ENCODE measurements at regions of chr7 and their contacts with region 1.

Region 1: DNA sequence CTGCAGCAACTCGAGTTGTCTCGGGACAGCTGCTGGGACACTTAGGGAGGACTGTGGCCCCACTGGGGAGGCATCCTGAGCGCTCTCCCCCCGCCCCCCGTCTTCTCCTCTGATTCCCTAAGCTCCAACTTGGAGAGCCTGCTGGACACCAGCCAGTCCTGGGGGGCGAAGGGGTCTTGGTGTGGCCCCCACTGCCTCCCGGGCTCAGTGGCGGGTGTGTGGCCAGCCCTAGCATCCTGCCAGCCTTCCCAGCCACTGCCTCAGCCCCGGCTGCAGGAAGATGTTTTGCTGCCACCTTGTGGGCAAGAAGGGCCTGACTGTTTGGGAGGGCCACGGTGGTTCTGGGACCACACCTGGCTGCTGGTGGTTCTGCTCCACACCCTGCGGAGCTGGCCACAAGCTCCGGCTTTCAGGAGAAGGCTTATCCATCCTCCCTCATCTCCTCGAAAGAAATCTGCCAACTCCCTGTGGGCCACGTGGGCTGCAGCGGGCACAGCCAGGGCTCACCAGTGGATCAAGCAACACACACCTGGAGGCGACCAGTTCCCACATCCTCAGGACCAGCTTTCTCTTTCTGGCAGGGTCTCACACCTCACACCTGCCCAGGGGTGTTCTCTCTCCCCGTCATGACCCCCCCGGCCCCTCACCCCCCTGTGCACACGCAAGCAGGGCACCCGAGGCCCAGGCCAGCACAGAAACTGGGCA is 24.8 kb downstream of the AGAP3 start:
- DNase-seq: peak; percentile 54 to 84 (median 78)
- ATAC-seq: peak; percentile 80
- H3K4me3 ChIP-seq: no peak overlapping the region
- H3K4me3 Mint-ChIP-seq: no peak overlapping the region
- H3K27ac ChIP-seq: no peak overlapping the region
- H3K27ac Mint-ChIP-seq: no peak overlapping the region
- H3K4me1 ChIP-seq: no peaks in the 10 kb centered on the region
- H3K4me1 Mint-ChIP-seq: peaks cover 6% of the 10 kb centered on the region
- H3K27me3 ChIP-seq: peaks cover 2 to 8% of the 10 kb centered on the region in 2 experiments
- H3K27me3 Mint-ChIP-seq: peaks cover 9% of the 10 kb centered on the region
- CTCF ChIP-seq: peak; percentile 75

Region 2: DNA sequence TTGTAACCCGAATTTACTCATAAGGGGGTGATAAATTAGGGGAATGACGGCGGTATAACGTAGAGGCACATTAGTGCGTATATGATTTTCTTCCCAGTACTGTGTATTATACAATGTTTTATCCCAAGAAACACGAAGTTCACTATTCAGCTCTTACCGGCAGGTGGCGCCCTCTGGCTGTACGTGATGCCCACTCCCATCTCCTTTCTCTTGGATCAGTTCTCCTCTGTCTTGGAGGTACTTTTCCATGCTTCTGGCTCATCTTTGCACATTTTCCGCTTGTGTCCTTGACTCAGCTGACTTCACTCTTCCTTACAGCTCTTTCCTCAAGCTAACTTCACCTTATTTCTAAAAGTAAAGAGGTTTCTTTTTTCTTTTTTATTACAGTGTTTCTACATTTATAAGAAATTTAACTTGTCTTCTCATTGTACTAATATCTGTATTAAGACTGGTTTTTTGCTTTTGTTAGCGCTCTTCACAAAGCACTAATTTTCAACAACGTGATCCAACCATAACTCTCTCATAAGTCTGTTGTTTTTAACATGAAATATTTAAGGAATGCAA is 332.3 kb before region 1 on chr7:
- CTCF ChIA-PET with region 1: interaction called, 4 read pairs
- POLR2A ChIA-PET with region 1: no interaction called
- intact Hi-C with region 1: loop called in 1 of 2 experiments (anchors 2 kb)
- DNase-seq: peak; percentile 46 to 82 (median 73)
- ATAC-seq: peak; percentile 71
- H3K4me3 ChIP-seq: no peak overlapping the region
- H3K4me3 Mint-ChIP-seq: no peak overlapping the region
- H3K27ac ChIP-seq: no peak overlapping the region
- H3K27ac Mint-ChIP-seq: no peak overlapping the region
- H3K4me1 ChIP-seq: peaks cover 2% of the 10 kb centered on the region
- H3K4me1 Mint-ChIP-seq: peaks cover 5% of the 10 kb centered on the region
- H3K27me3 ChIP-seq: no peaks in the 10 kb centered on the region
- H3K27me3 Mint-ChIP-seq: peaks cover 2% of the 10 kb centered on the region
- CTCF ChIP-seq: peak; percentile 93

Region 3: DNA sequence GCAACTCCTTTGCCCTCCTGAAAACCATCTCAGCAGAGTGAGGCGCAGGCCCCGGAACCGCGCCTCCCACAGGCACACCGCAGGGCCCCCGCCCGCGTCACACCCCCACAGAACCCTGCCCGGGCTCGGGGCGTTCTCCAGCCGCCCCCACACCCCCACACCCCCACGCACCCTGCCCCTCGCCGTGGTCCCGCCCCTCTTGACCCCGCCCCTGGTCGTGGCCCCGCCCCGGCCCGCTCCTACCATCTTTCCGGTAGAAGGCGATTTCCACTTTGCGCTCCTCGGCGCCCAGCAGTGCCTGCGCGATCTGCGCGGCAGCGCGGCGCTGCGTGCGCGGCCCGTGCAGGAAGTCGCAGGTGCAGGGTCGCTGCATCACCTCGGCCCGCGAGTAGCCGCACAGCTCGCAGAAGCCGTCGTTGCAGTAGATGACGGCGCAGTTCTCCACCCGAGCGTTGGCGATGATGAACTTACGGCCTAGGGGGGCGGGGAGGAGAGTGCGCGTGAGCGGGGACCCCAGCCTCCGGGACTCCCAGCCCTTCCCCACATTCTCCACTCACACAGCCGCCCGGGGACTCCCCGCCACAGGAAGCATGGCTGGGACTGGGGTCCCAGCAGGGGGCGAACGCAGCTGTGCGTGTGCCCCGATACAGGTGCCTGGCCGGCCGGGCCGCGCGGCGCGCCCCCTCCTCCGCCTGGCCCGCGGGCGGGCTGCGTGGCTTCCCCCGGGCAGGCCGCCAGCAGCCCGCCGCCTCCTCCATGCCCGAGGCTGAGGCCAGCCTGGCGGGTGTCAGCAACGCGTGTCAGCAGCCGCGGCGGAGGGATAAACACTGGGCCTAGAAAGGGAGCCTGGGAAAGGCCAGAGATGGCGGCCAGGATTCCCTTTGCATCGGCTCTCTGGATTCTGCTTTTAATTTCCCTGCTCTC is 136.4 kb before region 1 on chr7:
- CTCF ChIA-PET with region 1: interaction called, 11 read pairs
- POLR2A ChIA-PET with region 1: no interaction called
- intact Hi-C with region 1: no loop called
- DNase-seq: peak; percentile 70 to 90 (median 80)
- ATAC-seq: peak; percentile 77
- H3K4me3 ChIP-seq: peak overlapping the region; percentile 63 to 69
- H3K4me3 Mint-ChIP-seq: peak overlapping the region; percentile 84
- H3K27ac ChIP-seq: peak overlapping the region; percentile 24 to 82
- H3K27ac Mint-ChIP-seq: peak overlapping the region; percentile 89
- H3K4me1 ChIP-seq: peaks cover 43% of the 10 kb centered on the region
- H3K4me1 Mint-ChIP-seq: peaks cover 38% of the 10 kb centered on the region
- H3K27me3 ChIP-seq: peaks cover 17 to 20% of the 10 kb centered on the region in 2 experiments
- H3K27me3 Mint-ChIP-seq: peaks cover 18% of the 10 kb centered on the region
- CTCF ChIP-seq: peak; percentile 24

Region 4: DNA sequence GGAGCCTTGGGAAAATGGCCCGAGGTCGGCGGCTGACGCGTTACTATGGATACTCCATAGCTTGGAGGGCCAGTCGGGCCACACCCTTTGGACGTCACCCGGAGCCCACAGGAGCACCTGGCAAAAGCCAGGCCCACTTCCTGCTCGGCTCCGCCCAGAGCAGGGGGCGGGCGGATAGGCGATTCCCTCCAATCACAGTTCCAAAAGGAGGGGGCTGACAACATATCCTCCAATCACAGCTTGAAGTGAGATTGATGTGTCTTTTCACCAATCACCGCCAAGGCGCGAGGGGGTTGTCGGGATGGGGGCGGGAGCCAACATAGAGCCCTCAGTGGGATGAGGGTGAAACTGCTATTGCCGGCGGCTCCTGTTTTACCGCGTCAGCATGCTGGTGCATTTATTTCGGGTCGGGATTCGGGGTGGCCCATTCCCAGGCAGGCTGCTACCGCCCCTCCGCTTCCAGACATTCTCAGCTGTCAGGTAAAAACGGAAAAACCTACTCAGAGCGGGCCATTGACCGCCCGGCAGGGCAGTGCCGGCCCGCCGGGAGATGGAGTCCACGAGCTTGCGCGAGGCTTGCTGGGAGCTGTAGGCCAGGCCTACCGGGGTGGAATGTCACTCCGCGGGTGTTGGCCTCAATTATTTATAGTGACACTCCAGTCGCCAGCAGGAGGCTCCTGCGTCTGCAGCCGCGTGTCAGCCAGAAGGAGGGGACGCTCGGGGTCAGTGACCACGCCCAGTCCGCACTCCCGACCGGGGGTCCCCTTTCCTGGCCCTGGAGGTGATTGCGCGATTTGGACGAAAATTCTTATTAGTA is 82.8 kb before region 1 on chr7 and contains the start of gene ABCB8:
- CTCF ChIA-PET with region 1: interaction called, 13 read pairs
- POLR2A ChIA-PET with region 1: interaction called, 4 read pairs
- intact Hi-C with region 1: loop called (anchors 1 to 2 kb)
- DNase-seq: peak; percentile 93 to 99 (median 98)
- ATAC-seq: peak; percentile 92
- H3K4me3 ChIP-seq: peak within 1 kb of the TSS; percentile 67 to 75
- H3K4me3 Mint-ChIP-seq: peak within 1 kb of the TSS; percentile 96
- H3K27ac ChIP-seq: peak within 1 kb of the TSS; percentile 94 to 96
- H3K27ac Mint-ChIP-seq: peak within 1 kb of the TSS; percentile 99
- H3K4me1 ChIP-seq: peaks cover 12% of the 10 kb centered on the region
- H3K4me1 Mint-ChIP-seq: peaks cover 24% of the 10 kb centered on the region
- H3K27me3 ChIP-seq: no peaks in the 10 kb centered on the region
- H3K27me3 Mint-ChIP-seq: no peaks in the 10 kb centered on the region
- CTCF ChIP-seq: peak; percentile 35
- total RNA-seq, gene ABCB8: 43.6 to 49.3 TPM

Region 5: DNA sequence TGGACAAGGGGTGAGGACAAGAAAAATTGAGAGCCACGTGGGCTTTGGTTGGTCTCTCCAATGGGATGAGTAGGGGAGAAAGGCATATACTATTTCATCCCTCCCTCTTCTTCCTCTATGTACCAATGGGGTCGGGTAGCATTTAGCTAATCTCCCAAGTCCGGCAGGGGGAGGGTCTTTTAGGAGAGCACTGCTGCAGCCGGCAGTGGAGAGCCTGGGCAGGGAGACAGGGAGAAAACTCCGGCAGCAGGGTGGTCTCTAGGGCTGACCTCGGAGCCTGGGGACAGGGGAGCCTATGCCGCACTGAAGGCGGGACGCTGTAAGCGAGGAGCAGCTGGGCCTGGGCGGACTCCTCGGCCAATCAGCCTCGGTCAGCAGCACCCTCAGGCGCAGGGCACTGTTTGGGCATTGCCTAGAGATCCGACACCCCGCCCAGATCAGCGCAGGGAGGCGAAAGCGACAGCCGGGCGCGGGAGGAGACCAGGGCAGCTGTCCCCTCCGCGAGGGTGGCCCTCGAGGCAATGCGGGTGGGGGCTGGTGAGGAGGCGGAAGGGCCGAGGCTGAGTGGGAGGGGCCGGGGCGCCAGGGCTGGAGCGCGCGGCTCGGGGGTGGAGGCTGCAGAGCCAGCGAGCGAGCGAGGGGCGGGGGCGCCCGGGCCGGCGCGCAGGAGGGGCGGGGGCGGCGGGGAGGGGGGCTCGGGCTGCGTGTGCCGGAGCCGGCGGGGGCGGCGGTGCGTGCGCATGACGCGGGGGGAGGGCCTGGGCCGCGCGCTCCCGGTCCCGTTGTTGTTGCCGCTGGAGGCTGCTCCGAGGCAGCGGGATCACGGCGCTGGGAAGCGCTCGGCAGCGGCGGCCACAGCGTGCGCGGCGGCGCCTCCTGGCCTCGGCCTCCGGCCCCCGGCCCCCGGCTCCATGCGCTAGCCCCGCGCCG is 25.1 kb before region 1 on chr7 and contains the start of gene AGAP3:
- CTCF ChIA-PET with region 1: interaction called, 7 read pairs
- POLR2A ChIA-PET with region 1: interaction called, 3 read pairs
- intact Hi-C with region 1: loop called (anchors 1 to 2 kb)
- DNase-seq: peak in 7 of 9 experiments; percentile 30 to 71 (median 57)
- ATAC-seq: no peak
- H3K4me3 ChIP-seq: peak within 1 kb of the TSS; percentile 65 to 80
- H3K4me3 Mint-ChIP-seq: peak within 1 kb of the TSS; percentile 88
- H3K27ac ChIP-seq: peak within 1 kb of the TSS in 1 of 2 experiments; percentile 51
- H3K27ac Mint-ChIP-seq: peak within 1 kb of the TSS; percentile 85
- H3K4me1 ChIP-seq: peaks cover 58% of the 10 kb centered on the region
- H3K4me1 Mint-ChIP-seq: peaks cover 44% of the 10 kb centered on the region
- H3K27me3 ChIP-seq: no peaks in the 10 kb centered on the region
- H3K27me3 Mint-ChIP-seq: peaks cover 21% of the 10 kb centered on the region
- CTCF ChIP-seq: no peak
- total RNA-seq, gene AGAP3: 35.0 to 36.6 TPM

Region 6: GRCh38 chr7:151131592-151132293 is 20.6 kb after region 1 on chr7:
- CTCF ChIA-PET with region 1: interaction called, 11 read pairs
- POLR2A ChIA-PET with region 1: no interaction called
- intact Hi-C with region 1: no loop called
- DNase-seq: peak in 1 of 9 experiments; percentile 15
- ATAC-seq: no peak
- H3K4me3 ChIP-seq: no peak overlapping the region
- H3K4me3 Mint-ChIP-seq: no peak overlapping the region
- H3K27ac ChIP-seq: no peak overlapping the region
- H3K27ac Mint-ChIP-seq: no peak overlapping the region
- H3K4me1 ChIP-seq: no peaks in the 10 kb centered on the region
- H3K4me1 Mint-ChIP-seq: no peaks in the 10 kb centered on the region
- H3K27me3 ChIP-seq: no peaks in the 10 kb centered on the region
- H3K27me3 Mint-ChIP-seq: no peaks in the 10 kb centered on the region
- CTCF ChIP-seq: no peak

Measured in CD8-positive, alpha-beta T cell (primary cell).